ENCODE measurements at regions of chr7 and their contacts with region 1.

Region 1: GRCh38 chr7:85554236-85555178 is 367.7 kb upstream of the SEMA3D start:
- DNase-seq: peak; percentile 19
- H3K4me3 ChIP-seq: no peak overlapping the region
- H3K27ac ChIP-seq: no peak overlapping the region
- H3K4me1 ChIP-seq: no peaks in the 10 kb centered on the region; a peak in 1 of 4 replicates
- H3K27me3 ChIP-seq: no peaks in the 10 kb centered on the region
- CTCF ChIP-seq: peak; percentile 95
- EP300 ChIP-seq: peak in 1 of 2 experiments; percentile 32; a peak in 1 of 4 replicates
- RAD21 ChIP-seq: peak; percentile 93

Region 2: GRCh38 chr7:85030893-85031292 is 523.6 kb before region 1 on chr7:
- CTCF ChIA-PET with region 1: interaction called, 156 read pairs
- POLR2A ChIA-PET with region 1: no interaction called
- DNase-seq: peak; percentile 1
- H3K4me3 ChIP-seq: no peak overlapping the region
- H3K27ac ChIP-seq: no peak overlapping the region
- H3K4me1 ChIP-seq: peaks cover 0 to 5% of the 10 kb centered on the region in 2 experiments; a peak in 2 of 4 replicates
- H3K27me3 ChIP-seq: no peaks in the 10 kb centered on the region
- CTCF ChIP-seq: peak; percentile 95
- EP300 ChIP-seq: no peak
- RAD21 ChIP-seq: peak; percentile 78

Region 3: DNA sequence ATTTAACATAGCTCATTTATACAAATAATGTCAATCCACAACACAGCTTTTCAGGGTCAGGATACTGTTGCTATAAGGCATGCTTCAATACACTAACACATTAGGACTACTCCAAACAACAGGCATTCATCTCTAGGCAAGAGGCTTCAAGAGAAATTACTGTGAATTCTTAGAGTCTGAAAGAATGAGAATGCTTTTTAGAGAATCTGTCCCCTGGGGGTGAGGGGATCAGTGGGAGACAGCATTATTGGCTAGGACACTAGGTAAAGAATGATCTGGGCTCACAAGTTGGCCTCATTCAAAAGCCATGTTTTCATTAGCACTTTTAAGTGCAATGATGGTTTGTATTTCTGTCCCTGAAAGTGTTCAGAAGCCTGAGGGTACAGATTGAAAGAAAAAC is 500.2 kb before region 1 on chr7:
- CTCF ChIA-PET with region 1: interaction called, 10 read pairs
- POLR2A ChIA-PET with region 1: no interaction called
- DNase-seq: no peak
- H3K4me3 ChIP-seq: no peak overlapping the region
- H3K27ac ChIP-seq: no peak overlapping the region
- H3K4me1 ChIP-seq: no peaks in the 10 kb centered on the region
- H3K27me3 ChIP-seq: no peaks in the 10 kb centered on the region
- CTCF ChIP-seq: no peak
- EP300 ChIP-seq: no peak
- RAD21 ChIP-seq: no peak

Region 4: DNA sequence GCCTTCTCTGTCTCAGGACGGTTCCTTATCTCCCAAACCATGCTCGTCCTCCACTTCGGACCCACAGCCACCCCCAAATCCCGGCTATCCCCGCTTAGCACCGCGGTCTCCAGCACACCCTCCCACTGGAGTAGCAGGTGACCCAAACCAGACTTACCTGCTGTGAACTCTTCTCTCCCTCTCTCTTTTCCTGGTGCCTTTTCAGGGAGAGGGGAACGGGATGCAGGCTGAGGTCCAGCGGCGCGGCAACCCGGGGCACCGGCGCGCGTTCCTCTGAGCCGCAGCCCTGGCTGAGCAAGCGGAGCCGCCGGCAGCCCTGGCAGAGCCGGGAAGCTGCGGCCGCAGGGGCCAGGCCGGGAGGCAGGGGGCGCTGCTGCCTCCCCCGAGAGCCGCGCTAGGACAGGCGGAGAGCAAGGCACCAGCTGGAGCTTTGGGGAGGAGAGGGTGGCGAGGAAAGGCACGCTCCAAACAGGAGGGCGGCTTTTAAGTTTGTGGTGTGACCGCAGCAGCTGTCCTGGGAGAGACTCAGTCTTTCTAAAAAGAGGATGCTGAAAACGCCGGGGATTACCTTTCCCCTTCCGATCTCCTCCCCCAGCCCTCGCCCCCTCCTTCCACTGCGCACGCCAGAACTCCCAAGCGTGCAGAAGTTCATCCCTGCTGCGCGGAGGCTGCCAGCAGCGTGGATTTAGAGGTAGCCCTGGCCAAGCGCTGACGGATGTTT is 367.8 kb before region 1 on chr7 and contains the start of gene SEMA3D:
- CTCF ChIA-PET with region 1: interaction called, 50 read pairs
- POLR2A ChIA-PET with region 1: no interaction called
- DNase-seq: peak; percentile 93
- H3K4me3 ChIP-seq: peak within 1 kb of the TSS; percentile 90 to 97
- H3K27ac ChIP-seq: peak within 1 kb of the TSS; percentile 29 to 61; a peak in 3 of 4 replicates
- H3K4me1 ChIP-seq: peaks cover 4 to 26% of the 10 kb centered on the region in 2 experiments; a peak in 3 of 4 replicates
- H3K27me3 ChIP-seq: no peaks in the 10 kb centered on the region
- CTCF ChIP-seq: peak; percentile 98
- EP300 ChIP-seq: no peak; a peak in 1 of 4 replicates
- RAD21 ChIP-seq: peak; percentile 77
- polyA plus RNA-seq, gene SEMA3D: 30.1 and 48.7 TPM in 2 replicates

Region 5: GRCh38 chr7:85483177-85483576 is 71.3 kb before region 1 on chr7:
- CTCF ChIA-PET with region 1: no interaction called
- POLR2A ChIA-PET with region 1: no interaction called
- DNase-seq: no peak
- H3K4me3 ChIP-seq: no peak overlapping the region
- H3K27ac ChIP-seq: peak overlapping the region; percentile 29 to 79; a peak in 2 of 4 replicates
- H3K4me1 ChIP-seq: peaks cover 16 to 18% of the 10 kb centered on the region in 2 experiments; a peak in 3 of 4 replicates
- H3K27me3 ChIP-seq: no peaks in the 10 kb centered on the region
- CTCF ChIP-seq: no peak
- EP300 ChIP-seq: peak; percentile 17 to 57; a peak in 3 of 4 replicates
- RAD21 ChIP-seq: no peak

Region 6: DNA sequence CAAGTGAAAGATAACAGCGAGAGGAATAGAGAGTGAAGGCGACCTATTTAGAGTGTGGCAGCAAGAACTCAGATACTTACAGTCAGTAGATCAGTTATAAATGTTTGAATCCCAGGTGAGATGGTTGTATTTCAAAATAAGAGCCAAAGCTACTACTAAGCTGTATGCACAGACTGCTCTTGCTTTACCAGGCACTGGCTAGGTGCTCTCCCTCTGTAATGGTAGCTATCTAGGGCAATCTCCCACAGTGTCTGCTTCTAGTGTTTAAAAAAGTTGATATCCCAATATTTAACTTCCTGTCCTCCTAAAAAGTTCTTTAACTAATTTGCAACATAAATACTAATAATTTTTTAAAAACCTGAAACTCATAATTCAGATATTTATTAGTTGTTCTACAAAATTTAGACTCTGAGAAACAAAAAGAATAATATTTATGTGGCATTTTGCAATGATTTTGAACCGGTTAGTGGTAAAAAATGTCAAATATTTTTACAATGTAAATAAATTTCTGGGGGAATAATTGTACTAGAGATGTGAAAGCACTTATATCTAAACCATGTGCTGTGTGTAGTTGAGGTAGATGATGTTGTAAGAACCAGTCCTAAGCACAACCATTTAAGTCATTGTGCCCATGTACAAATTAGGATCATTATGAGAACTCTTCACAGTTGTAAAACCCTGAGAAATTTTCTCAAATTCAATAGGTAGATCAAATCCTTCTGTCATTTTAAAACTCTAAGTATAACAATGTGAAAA is 18.4 kb before region 1 on chr7:
- CTCF ChIA-PET with region 1: interaction called, 10 read pairs
- POLR2A ChIA-PET with region 1: no interaction called
- DNase-seq: no peak
- H3K4me3 ChIP-seq: no peak overlapping the region
- H3K27ac ChIP-seq: no peak overlapping the region
- H3K4me1 ChIP-seq: peaks cover 0 to under 1% of the 10 kb centered on the region in 2 experiments; a peak in 2 of 4 replicates
- H3K27me3 ChIP-seq: no peaks in the 10 kb centered on the region
- CTCF ChIP-seq: no peak
- EP300 ChIP-seq: no peak
- RAD21 ChIP-seq: no peak

Region 7: DNA sequence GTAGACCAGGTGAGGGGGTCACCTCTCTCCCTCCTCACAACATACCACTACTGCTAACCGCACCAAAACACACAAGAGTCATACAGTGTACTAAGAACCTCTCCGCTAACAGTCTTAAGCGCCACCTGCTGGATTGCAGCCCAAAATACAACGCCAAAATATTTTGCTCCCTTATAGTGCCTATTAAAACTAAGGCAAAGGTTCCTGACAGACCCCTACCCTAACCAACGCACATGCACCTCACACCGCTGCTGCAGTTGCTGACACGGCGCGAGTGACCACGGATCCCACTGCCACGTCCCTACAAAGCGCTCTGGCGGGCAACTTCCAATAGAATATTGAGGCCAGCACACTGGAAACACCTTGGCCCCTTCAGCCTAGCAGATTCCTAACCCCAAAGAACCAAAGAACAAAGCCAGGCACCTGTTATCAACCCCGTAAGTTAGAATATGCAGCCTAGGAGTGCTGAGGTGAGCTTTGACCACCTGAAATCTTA is 196.0 kb after region 1 on chr7:
- CTCF ChIA-PET with region 1: interaction called, 18 read pairs
- POLR2A ChIA-PET with region 1: no interaction called
- DNase-seq: peak; percentile 49
- H3K4me3 ChIP-seq: no peak overlapping the region; a peak in 1 of 4 replicates
- H3K27ac ChIP-seq: no peak overlapping the region
- H3K4me1 ChIP-seq: no peaks in the 10 kb centered on the region
- H3K27me3 ChIP-seq: no peaks in the 10 kb centered on the region
- CTCF ChIP-seq: peak; percentile 81
- EP300 ChIP-seq: no peak
- RAD21 ChIP-seq: peak; percentile 88

Region 8: GRCh38 chr7:85851571-85852193 is 297.2 kb after region 1 on chr7:
- CTCF ChIA-PET with region 1: interaction called, 11 read pairs
- POLR2A ChIA-PET with region 1: no interaction called
- DNase-seq: peak; percentile 31
- H3K4me3 ChIP-seq: no peak overlapping the region; a peak in 1 of 4 replicates
- H3K27ac ChIP-seq: no peak overlapping the region
- H3K4me1 ChIP-seq: no peaks in the 10 kb centered on the region
- H3K27me3 ChIP-seq: no peaks in the 10 kb centered on the region
- CTCF ChIP-seq: peak; percentile 85
- EP300 ChIP-seq: no peak
- RAD21 ChIP-seq: peak; percentile 82

Measured in SK-N-SH (cell line).